Tibial artery (tissue), 4 donors: ENCODE measurements at regions of chr9 and their contacts with region 1.

Region 1: GRCh38 chr9:6367128-6367890 is 39.1 kb downstream of the TPD52L3 start:
- DNase-seq: no peak
- H3K4me3 ChIP-seq: no peak overlapping the region
- H3K27ac ChIP-seq: no peak overlapping the region
- H3K4me1 ChIP-seq: no peaks in the 10 kb centered on the region
- H3K27me3 ChIP-seq: no peaks in the 10 kb centered on the region
- CTCF ChIP-seq: no peak

Region 2: GRCh38 chr9:5939530-5939929 is 427.8 kb before region 1 on chr9:
- intact Hi-C with region 1: no loop called
- DNase-seq: no peak
- H3K4me3 ChIP-seq: no peak overlapping the region
- H3K27ac ChIP-seq: no peak overlapping the region
- H3K4me1 ChIP-seq: no peaks in the 10 kb centered on the region
- H3K27me3 ChIP-seq: no peaks in the 10 kb centered on the region
- CTCF ChIP-seq: no peak

Region 3: GRCh38 chr9:6667633-6668280 is 300.4 kb after region 1 on chr9:
- intact Hi-C with region 1: loop called (anchors 10 kb)
- DNase-seq: no peak
- H3K4me3 ChIP-seq: no peak overlapping the region
- H3K27ac ChIP-seq: no peak overlapping the region
- H3K4me1 ChIP-seq: no peaks in the 10 kb centered on the region
- H3K27me3 ChIP-seq: no peaks in the 10 kb centered on the region
- CTCF ChIP-seq: peak; percentile 25 to 27

Region 4: DNA sequence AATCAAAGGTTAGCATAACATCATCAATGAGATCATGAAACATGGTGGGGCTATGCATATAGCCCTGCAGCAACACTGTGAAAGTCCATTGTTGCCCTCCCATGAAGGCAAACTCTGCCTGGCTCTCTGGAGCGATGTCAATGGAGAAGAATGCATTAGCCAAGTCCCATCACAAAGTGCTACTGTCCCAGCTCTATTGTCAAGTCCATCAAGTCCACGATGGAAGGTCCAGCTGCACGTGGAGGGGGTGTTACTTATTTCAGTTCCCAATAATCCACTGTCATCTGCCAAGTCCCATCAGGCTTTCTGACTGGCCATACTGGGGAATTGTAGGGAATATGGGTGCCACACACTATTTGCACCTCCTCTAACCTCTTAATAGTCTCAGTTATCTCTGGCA is 1421.5 kb after region 1 on chr9:
- intact Hi-C with region 1: loop called (anchors 5 kb)
- DNase-seq: no peak
- H3K4me3 ChIP-seq: no peak overlapping the region
- H3K27ac ChIP-seq: no peak overlapping the region
- H3K4me1 ChIP-seq: no peaks in the 10 kb centered on the region
- H3K27me3 ChIP-seq: no peaks in the 10 kb centered on the region
- CTCF ChIP-seq: no peak